ENCODE measurements at regions of chr9 and their contacts with region 1.

Region 1: GRCh38 chr9:75890472-75891276 is at the start of gene PCSK5:
- DNase-seq: peak; percentile 83 to 85 (median 83)
- H3K4me3 ChIP-seq: peak within 1 kb of the TSS; percentile 82 to 99 (median 95)
- H3K4me3 Mint-ChIP-seq: peak within 1 kb of the TSS; percentile 97 to 98
- H3K27ac ChIP-seq: peak within 1 kb of the TSS; percentile 68 to 88
- H3K27ac Mint-ChIP-seq: peak within 1 kb of the TSS; percentile 85 to 98 (median 95)
- H3K4me1 ChIP-seq: peaks cover 34 to 41% of the 10 kb centered on the region in 2 donors
- H3K4me1 Mint-ChIP-seq: peaks cover 42% of the 10 kb centered on the region
- H3K27me3 ChIP-seq: peaks cover 0 to 11% of the 10 kb centered on the region in 2 donors
- H3K27me3 Mint-ChIP-seq: peaks cover 6 to 20% (median 13%) of the 10 kb centered on the region in 3 donors
- CTCF ChIP-seq: no peak
- polyA plus RNA-seq, gene PCSK5: 4.8 to 13.0 (median 7.1) TPM

Region 2: GRCh38 chr9:75873712-75874111 is 17.0 kb before region 1 on chr9:
- intact Hi-C with region 1: loop called in 1 of 2 experiments (anchors 2 kb)
- DNase-seq: peak; percentile 42 to 65 (median 61)
- H3K4me3 ChIP-seq: no peak overlapping the region
- H3K4me3 Mint-ChIP-seq: no peak overlapping the region
- H3K27ac ChIP-seq: peak overlapping the region in 1 of 2 donors; percentile 56
- H3K27ac Mint-ChIP-seq: peak overlapping the region; percentile 79 to 93 (median 84)
- H3K4me1 ChIP-seq: peaks cover 34 to 37% of the 10 kb centered on the region in 2 donors
- H3K4me1 Mint-ChIP-seq: peaks cover 38% of the 10 kb centered on the region
- H3K27me3 ChIP-seq: no peaks in the 10 kb centered on the region
- H3K27me3 Mint-ChIP-seq: peaks cover 0 to 2% (median 0%) of the 10 kb centered on the region in 3 donors
- CTCF ChIP-seq: no peak

Region 3: DNA sequence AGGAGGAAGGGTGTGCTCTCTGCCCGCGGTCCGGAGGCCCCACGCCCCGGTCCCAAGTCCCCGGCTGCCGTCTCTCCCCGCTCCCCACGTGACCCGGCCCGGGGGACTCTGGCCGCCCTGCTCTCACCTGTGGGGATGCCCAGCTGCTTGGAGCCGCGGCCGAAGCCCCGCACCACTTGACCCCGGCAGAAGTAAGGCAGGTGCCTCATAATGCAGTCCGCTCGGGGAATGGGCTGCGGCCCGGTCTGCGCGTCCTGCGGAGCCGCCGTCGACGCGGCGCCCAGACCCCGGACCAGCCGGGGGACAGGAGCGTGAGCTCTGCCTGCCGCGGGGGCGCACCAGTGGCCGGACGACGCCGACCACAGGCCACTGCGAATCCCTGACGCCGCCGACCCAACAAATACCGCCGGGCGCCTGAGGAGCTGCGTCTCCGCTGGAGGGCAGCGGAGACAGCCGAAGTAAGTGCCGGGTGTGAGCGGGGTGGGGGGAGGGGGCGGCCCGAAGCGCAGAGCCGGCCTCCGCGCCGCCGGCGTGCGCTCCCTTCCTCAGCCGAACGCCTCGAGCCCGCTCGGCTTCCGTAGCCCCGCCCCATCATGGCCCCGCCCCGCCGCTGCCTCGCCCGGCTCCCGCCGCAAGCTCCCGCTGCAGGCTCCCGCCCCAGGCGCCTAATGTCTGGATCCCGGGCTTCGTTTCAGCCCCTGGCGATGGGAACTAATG is 503.4 kb after region 1 on chr9 and contains the start of gene RFK:
- intact Hi-C with region 1: loop called in 1 of 2 experiments (anchors 10 kb)
- DNase-seq: peak; percentile 86 to 94 (median 93)
- H3K4me3 ChIP-seq: peak within 1 kb of the TSS; percentile 94 to 97 (median 96)
- H3K4me3 Mint-ChIP-seq: peak within 1 kb of the TSS; percentile 90 to 98
- H3K27ac ChIP-seq: peak within 1 kb of the TSS; percentile 98 to 99
- H3K27ac Mint-ChIP-seq: peak within 1 kb of the TSS; percentile 99 to 100 (median 99)
- H3K4me1 ChIP-seq: peaks cover 25 to 32% of the 10 kb centered on the region in 2 donors
- H3K4me1 Mint-ChIP-seq: peaks cover 39% of the 10 kb centered on the region
- H3K27me3 ChIP-seq: no peaks in the 10 kb centered on the region
- H3K27me3 Mint-ChIP-seq: no peaks in the 10 kb centered on the region
- CTCF ChIP-seq: peak; percentile 53
- polyA plus RNA-seq, gene RFK: 5.9 to 46.6 (median 44.4) TPM